ENCODE measurements at regions of chr5 and their contacts with region 1.

Region 1: GRCh38 chr5:172868924-172869591 is 35.0 kb downstream of the ERGIC1 start:
- DNase-seq: peak; percentile 83 to 98
- H3K4me3 ChIP-seq: peak overlapping the region; percentile 12 to 34
- H3K27ac ChIP-seq: peak overlapping the region; percentile 99
- H3K4me1 ChIP-seq: peaks cover 47 to 80% of the 10 kb centered on the region in 2 donors
- H3K27me3 ChIP-seq: no peaks in the 10 kb centered on the region
- CTCF ChIP-seq: peak; percentile 44 to 56 (median 56)

Region 2: GRCh38 chr5:172733131-172733973 is 135.7 kb before region 1 on chr5:
- intact Hi-C with region 1: loop called (anchors 5 kb)
- DNase-seq: peak; percentile 71 to 97
- H3K4me3 ChIP-seq: peak overlapping the region in 1 of 2 donors; percentile 34
- H3K27ac ChIP-seq: peak overlapping the region; percentile 96 to 97
- H3K4me1 ChIP-seq: peaks cover 23 to 37% of the 10 kb centered on the region in 2 donors
- H3K27me3 ChIP-seq: no peaks in the 10 kb centered on the region
- CTCF ChIP-seq: no peak

Region 3: DNA sequence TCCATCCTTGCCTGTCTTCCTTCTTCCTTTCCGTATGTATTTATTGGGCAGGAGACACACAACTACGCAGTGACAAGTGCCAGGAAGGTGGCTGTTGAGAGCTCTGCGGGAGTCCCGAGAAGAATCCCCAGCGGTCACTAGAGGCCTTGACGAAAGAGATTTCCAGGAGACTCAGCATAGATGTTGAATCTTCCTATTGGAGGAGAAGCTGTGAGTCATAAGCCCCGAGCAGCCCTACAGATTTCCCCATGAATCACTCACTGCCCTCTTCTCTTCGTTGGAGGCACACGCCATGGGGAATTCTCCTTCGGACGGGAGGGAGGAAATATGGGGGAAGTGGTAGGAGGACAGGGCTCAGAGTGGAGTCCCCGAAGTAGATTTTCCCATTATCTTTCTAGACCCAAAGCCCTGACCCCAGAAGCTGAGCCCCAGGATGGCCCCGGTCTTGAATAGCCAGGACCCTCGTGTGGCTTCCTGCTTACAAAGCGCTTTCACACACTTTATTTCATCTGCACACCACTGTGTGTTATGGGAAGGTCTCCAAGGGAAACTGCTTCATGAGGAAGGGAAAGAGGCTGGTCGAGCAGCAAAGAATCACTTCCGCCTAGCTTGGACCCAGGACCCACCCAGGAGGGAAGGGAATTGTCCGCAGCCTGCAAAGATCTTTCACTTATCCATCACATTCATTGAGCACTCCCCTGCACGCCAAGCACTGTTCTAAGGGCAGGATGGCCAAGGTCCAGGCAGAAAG is 110.8 kb before region 1 on chr5:
- intact Hi-C with region 1: no loop called
- DNase-seq: peak in 1 of 2 donors; percentile 80
- H3K4me3 ChIP-seq: no peak overlapping the region
- H3K27ac ChIP-seq: peak overlapping the region; percentile 40 to 49
- H3K4me1 ChIP-seq: no peaks in the 10 kb centered on the region
- H3K27me3 ChIP-seq: no peaks in the 10 kb centered on the region
- CTCF ChIP-seq: no peak

Region 4: DNA sequence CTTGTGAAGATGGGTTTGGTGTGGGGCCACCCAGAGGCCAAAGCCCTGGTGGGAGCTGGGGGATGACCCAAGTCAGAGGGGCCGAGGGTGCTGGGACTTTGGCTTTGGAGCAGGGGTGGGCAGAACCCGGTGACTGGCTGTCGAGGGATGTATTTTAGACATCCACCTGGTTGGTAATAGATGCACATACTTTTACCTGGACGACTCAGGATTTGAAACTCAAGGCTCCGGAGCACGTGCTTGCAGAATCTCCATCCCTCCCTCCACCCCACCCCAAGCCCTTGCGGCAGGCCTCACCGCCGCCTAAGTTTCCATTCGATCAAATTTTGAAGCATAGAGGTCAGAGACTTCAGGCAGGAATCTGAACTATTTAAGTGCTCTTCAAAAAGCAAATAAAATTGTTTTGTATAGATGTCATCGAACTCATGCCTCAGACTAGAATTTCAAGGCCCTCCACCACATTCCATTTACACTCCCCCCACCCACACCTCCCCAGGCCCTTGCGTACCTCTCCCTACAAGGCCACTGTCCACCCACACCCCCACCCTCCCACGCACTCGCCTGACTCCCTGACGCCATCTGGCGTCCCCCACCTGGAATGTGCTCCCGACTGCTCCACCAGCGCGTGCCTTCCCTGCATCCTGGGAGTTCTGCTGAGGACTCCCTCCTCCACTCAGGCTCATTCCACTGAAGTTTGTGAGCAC is 33.6 kb after region 1 on chr5:
- intact Hi-C with region 1: loop called (anchors 1 kb)
- DNase-seq: peak in 1 of 2 donors; percentile 95
- H3K4me3 ChIP-seq: peak overlapping the region in 1 of 2 donors; percentile 5
- H3K27ac ChIP-seq: peak overlapping the region; percentile 96 to 97
- H3K4me1 ChIP-seq: peaks cover 42 to 77% of the 10 kb centered on the region in 2 donors
- H3K27me3 ChIP-seq: no peaks in the 10 kb centered on the region
- CTCF ChIP-seq: peak; percentile 24 to 58 (median 58)

Region 5: DNA sequence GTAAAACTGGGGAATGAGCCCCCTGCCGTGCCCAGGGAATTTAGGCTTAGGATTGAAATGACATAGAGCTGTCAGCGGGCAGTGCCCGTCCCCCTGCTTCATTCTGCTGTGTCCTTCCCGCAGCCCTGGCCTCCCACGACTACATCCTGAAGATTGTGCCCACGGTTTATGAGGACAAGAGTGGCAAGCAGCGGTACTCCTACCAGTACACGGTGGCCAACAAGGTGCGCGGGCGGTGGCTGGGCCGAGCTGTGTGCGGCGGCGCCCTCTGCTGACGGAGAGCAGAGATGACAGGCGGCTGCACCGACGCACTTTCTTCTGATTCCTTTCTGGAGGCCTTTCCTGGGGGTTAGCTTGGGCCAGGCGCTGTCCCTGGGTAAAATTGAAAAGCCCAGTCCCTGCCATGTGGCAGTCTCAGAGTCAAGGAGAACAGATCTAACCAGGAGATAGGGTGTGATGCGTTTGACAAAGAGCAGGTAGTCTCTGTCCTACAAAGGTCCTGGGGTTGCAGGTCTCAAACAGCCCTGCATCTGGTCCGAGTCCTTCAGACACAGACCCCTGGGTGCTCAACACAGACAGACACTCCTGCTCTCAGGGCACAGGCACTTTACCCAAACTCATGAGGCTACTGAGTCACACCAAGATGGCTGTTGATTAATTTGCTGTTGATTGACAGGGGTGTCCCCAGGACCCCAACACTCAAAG is 63.4 kb after region 1 on chr5:
- intact Hi-C with region 1: loop called (anchors 2 kb)
- DNase-seq: peak in 1 of 2 donors; percentile 91
- H3K4me3 ChIP-seq: peak overlapping the region in 1 of 2 donors; percentile 11
- H3K27ac ChIP-seq: peak overlapping the region; percentile 93 to 94
- H3K4me1 ChIP-seq: peaks cover 18 to 22% of the 10 kb centered on the region in 2 donors
- H3K27me3 ChIP-seq: no peaks in the 10 kb centered on the region
- CTCF ChIP-seq: peak; percentile 96 to 98 (median 97)

Measured in ascending aorta (tissue), 2 donors.